GM23248 (cell line): ENCODE measurements at regions of chr3 and their contacts with region 1.

Region 1: GRCh38 chr3:130093741-130094391 is 12.2 kb downstream of the ALG1L2 start:
- DNase-seq: no peak
- H3K4me3 ChIP-seq: no peak overlapping the region
- H3K27ac ChIP-seq: no peak overlapping the region
- H3K4me1 ChIP-seq: 0 out of 2 replicates have a peak, but pooled peaks cover 3% of the 10 kb centered on the region
- H3K27me3 ChIP-seq: no peaks in the 10 kb centered on the region

Region 2: DNA sequence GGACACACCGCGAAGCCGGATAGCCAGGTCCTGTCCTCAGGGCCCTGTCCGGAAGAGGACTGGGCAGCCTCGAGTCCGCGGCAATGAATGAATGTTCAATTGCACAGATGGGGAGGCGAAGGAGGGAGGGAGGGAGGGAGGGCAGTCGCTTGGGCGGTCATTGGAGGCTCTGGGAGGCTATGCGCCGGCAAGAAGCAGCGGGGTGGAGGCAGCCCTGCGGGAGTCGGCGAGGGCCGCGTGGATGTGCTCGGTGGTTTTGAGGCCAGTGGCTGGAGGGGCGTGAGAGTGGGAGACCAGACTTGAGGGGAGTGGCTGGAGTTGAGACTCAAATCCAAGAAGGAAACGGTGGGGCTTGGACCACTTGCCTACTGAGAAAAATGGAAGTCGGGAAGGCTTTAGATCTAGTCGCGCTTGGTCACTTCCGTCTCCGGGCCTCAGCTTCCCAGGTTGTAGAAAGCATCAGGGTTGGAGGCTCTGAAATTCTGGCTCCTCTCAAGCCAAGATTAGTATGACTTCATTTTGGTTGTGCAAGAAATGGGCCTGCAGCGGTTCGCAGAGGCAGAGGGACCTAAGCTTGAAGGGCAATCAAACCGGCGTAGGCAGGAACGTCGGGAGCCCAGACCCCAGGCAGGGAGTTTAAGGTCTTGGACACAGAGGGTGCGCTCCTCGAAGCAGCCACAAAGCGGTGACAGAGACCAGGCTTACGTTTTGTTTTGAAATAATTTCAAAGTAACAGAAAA is 466.3 kb before region 1 on chr3:
- in situ Hi-C with region 1: loop called (anchors 25 kb)
- DNase-seq: peak; percentile 92
- H3K4me3 ChIP-seq: peak overlapping the region; percentile 62
- H3K27ac ChIP-seq: peak overlapping the region; percentile 97
- H3K4me1 ChIP-seq: peaks cover 27% of the 10 kb centered on the region
- H3K27me3 ChIP-seq: no peaks in the 10 kb centered on the region

Region 3: GRCh38 chr3:129947538-129948240 is 146.2 kb before region 1 on chr3:
- in situ Hi-C with region 1: loop called (anchors 5 kb)
- DNase-seq: no peak
- H3K4me3 ChIP-seq: no peak overlapping the region
- H3K27ac ChIP-seq: no peak overlapping the region
- H3K4me1 ChIP-seq: no peaks in the 10 kb centered on the region
- H3K27me3 ChIP-seq: peaks cover 36% of the 10 kb centered on the region